HCT116 (cell line): ENCODE measurements at regions of chr1 and their contacts with region 1.

Region 1: DNA sequence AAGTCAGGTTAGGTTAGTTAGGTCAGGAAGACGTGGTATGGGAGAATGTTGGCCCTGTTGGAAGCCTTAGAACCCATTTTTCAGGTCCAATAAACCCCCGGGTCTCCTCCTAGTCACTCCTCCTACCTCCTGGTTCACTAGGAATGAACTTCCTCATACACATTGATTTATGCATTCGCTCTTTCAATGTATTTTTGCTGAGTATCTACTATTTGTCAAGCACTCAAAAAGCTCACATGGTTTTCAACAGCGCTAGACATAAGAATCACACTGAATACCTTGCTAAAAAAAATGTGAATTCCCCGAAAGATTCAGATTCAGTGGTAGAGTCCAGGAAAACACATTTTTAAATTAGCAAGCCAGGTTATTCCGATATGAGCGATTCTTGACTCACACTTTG is 85.8 kb upstream of the LRRN2 start:
- DNase-seq: no peak
- ATAC-seq: no peak
- H3K4me3 ChIP-seq: no peak overlapping the region
- H3K27ac ChIP-seq: no peak overlapping the region
- H3K4me1 ChIP-seq: no peaks in the 10 kb centered on the region
- H3K27me3 ChIP-seq: peaks cover 27% of the 10 kb centered on the region
- CTCF ChIP-seq: no peak
- POLR2A ChIP-seq: no peak
- RAD21 ChIP-seq: no peak

Region 2: DNA sequence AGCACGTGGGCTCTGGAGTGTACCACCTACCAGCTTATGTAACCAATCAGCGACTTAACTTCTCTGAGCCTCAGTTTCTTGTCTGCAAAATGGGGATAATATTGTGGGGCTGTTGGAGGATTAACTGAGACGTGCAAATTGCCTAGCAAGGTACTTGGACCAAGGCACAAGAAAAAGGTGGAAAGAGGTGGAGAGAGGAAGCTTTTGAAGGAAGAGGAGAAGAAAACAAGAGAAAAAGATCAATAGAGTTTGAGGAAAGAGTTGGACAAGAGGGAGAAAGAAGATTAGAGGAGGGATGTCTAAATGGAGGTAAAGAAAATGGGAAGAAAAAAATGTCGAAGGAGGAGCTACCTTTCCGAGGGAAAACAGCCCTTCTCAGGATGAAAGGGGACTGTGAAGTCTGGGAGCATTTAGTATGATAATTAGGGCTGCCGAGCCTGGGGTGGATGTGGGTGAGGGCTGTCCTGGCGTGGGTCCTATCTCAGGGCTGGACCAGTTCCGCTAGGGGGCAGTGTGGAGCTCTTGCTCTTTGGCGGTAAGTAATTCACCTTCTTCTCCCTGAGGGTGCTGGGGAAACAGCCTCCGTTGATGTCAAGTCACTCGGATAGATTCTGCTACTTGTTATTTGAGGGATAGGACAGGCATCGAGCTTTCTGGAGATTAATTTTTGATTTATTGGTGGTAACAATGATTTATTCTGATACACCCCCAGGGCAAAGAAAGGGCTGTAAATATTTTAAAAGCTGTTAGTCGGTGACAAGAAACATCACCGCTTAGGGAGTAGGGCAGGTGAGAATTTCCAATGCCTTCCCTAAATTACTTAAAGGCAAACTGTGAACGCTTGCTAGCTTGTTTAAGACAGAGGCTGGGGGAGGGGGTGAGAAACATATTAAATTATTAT is 20.3 kb after region 1 on chr1:
- CTCF ChIA-PET with region 1: interaction called, 11 read pairs
- POLR2A ChIA-PET with region 1: no interaction called
- RAD21 ChIA-PET with region 1: no interaction called
- intact Hi-C with region 1: no loop called
- DNase-seq: peak; percentile 72
- ATAC-seq: peak; percentile 99
- H3K4me3 ChIP-seq: no peak overlapping the region
- H3K27ac ChIP-seq: no peak overlapping the region
- H3K4me1 ChIP-seq: 0 out of 4 replicates have a peak, but pooled peaks cover 0 to 5% of the 10 kb centered on the region in 2 experiments
- H3K27me3 ChIP-seq: peaks cover 26% of the 10 kb centered on the region; the same call in 1 of the 2 replicates
- CTCF ChIP-seq: peak; percentile 60 to 97 (median 92); a peak in 5 of 6 replicates
- POLR2A ChIP-seq: no peak
- RAD21 ChIP-seq: peak; percentile 36